PC-9 (cell line): ENCODE measurements at regions of chr12 and their contacts with region 1.

Region 1: DNA sequence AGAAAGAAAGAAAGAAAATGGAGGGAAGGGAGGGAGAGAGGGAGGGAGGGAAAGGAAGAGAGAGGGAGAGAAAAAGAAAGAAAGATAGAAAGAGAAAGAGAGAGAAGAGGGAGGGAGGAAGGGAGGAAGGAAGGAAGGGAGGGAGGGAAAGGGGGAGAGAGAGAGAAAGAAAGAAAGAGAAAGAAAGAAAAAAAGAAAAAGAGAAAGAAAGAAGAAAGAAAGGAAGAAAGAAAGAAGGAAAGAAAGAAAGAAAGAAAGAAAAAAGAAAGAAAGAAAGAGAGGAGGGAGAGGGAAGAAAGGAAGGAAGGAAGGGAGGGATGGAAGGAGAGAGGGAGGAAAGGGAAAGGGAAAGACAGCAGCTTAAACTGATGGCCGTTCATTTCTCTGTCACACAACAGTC is 457.5 kb downstream of the PDZRN4 start:
- DNase-seq: no peak
- H3K4me3 ChIP-seq: no peak overlapping the region
- H3K27ac ChIP-seq: no peak overlapping the region
- H3K4me1 ChIP-seq: no peaks in the 10 kb centered on the region
- H3K27me3 ChIP-seq: no peaks in the 10 kb centered on the region
- CTCF ChIP-seq: no peak

Region 2: GRCh38 chr12:41120211-41120610 is 525.4 kb before region 1 on chr12:
- CTCF ChIA-PET with region 1: no interaction called
- POLR2A ChIA-PET with region 1: no interaction called
- intact Hi-C with region 1: no loop called
- DNase-seq: no peak
- H3K4me3 ChIP-seq: no peak overlapping the region
- H3K27ac ChIP-seq: no peak overlapping the region
- H3K4me1 ChIP-seq: no peaks in the 10 kb centered on the region
- H3K27me3 ChIP-seq: no peaks in the 10 kb centered on the region
- CTCF ChIP-seq: no peak

Region 3: DNA sequence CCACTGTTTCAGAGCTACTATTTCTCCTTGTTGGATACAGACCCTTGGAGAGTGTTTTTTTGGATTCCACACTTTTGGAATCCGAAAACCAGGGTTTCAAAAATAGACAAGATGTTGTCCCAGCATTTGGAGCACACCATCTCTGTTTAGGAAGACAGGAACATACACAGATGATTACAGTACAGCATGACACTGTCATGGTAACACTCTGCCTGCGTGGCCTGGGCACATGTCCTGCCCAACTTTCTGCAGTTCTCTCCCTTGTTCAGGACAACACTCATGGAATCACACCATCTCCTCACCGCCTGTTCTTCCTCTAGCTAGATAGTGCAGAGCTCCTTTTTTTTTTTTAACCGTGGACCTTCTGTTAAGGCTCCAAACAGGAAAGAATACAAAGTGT is 88.3 kb before region 1 on chr12:
- CTCF ChIA-PET with region 1: interaction called, 19 read pairs
- POLR2A ChIA-PET with region 1: no interaction called
- intact Hi-C with region 1: no loop called
- DNase-seq: no peak
- H3K4me3 ChIP-seq: no peak overlapping the region
- H3K27ac ChIP-seq: no peak overlapping the region
- H3K4me1 ChIP-seq: no peaks in the 10 kb centered on the region
- H3K27me3 ChIP-seq: no peaks in the 10 kb centered on the region
- CTCF ChIP-seq: no peak

Region 4: DNA sequence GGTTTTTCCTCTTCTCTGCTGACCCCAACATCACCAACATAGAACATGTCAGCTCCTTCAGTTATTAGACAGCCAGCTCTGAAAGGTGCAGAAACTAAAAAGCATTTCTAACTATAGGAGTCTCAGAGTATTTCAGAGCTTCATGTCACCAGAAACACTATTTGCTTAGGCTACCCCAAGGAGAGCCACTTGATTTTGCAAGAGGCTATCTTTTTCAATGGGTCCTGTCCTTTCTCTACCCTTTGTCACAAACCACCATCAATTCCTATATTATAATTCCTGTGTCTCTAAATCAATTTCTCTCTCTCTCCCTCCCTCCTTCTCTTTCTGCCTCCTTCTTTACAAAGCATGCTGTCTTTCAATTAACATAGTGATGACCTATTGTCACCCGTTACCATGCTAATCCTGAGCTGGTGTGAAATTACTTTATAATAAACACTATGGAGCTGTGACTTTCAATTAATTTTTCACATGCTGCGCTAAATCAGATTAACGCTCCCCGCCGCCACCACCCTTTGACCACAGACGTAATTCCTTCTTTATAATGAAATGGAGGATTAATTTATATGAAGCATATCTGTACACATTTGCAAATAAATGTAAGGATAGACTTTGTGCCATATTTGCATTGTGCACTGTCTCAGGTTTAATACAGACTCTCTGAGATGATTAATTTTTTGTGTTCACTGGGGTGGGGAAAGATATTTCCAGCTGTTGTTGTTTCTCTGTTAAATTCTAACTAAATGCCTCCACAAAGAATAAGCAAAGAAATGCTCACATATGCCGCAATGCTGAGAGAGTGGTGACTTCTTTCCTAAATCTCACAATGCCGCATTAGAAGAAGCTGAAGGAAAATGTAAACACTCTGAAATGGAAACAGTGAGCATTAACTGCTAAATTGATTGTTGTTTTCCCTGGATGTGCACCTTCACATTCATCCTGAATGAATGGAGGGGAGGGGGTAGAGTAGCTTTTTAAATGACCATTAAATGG is 38.9 kb before region 1 on chr12:
- CTCF ChIA-PET with region 1: no interaction called
- POLR2A ChIA-PET with region 1: interaction called, 36 read pairs
- intact Hi-C with region 1: no loop called
- DNase-seq: no peak
- H3K4me3 ChIP-seq: no peak overlapping the region
- H3K27ac ChIP-seq: no peak overlapping the region
- H3K4me1 ChIP-seq: no peaks in the 10 kb centered on the region
- H3K27me3 ChIP-seq: no peaks in the 10 kb centered on the region
- CTCF ChIP-seq: no peak

Region 5: DNA sequence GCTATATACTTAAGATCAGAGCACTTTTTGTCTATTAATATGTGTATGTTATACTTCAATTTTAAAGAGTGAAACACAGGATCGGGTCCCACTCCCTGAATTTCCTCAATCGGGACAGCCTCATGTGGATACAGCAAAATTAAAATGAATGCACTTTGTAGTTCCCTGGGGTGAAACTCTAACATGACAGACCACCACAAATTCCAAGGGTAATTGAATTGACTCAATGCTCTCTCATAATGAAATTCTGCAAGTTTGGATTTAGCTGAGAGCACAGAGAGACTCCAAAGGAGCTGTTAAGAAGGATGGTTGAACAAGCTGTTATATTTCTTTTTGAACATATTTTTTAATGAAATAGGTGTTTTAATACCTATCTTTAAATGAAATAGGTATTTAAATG is 85.4 kb after region 1 on chr12:
- CTCF ChIA-PET with region 1: no interaction called
- POLR2A ChIA-PET with region 1: no interaction called
- intact Hi-C with region 1: no loop called
- DNase-seq: no peak
- H3K4me3 ChIP-seq: no peak overlapping the region
- H3K27ac ChIP-seq: no peak overlapping the region
- H3K4me1 ChIP-seq: no peaks in the 10 kb centered on the region
- H3K27me3 ChIP-seq: no peaks in the 10 kb centered on the region
- CTCF ChIP-seq: no peak